Caco-2 (cell line): ENCODE measurements at regions of chr19 and their contacts with region 1.

Region 1: DNA sequence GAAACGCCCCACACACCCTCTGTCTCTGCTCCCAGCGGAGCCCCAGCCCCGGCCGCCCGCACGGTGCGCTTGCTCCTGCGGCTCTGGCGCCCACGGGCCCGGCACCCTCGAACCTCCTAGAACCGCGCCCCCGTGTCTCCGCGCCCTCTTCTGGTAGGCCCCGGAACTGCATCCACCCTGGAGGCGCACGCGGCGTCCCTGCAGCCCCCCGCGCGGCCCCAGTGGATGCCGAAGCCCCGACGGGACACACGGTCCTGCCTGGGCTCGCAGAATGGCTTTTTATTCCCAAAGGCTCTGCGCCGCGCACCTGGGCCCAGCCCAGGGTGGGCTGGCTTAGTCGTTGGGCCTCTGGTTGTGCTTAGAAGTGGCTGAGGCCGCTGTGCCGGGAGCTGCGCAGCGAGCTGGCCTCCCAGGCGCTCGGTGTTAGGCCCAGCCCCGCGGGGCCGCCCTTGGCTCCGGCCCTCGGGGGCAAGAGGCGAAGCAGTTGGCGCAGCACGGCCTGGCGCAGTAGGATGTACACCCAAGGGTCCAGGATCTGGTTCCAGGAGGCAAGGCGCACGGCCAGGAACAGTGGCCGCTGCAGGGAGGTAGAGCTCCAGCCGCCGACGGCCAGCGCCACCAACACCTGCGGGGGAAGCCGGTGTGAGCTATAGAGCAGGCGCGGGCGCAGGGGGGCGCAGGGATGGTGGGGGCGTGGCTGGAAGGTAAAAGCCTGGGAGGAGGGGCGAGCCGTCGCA is 2.8 kb downstream of the PTGER1 start:
- DNase-seq: peak; percentile 66 to 81
- H3K4me3 ChIP-seq: peak overlapping the region; percentile 45
- H3K4me3 Mint-ChIP-seq: peak overlapping the region; percentile 50
- H3K27ac Mint-ChIP-seq: peak overlapping the region; percentile 60
- H3K4me1 ChIP-seq: no peaks in the 10 kb centered on the region; the same call in 1 of the 2 replicates
- H3K4me1 Mint-ChIP-seq: peaks cover 15% of the 10 kb centered on the region
- H3K27me3 ChIP-seq: no peaks in the 10 kb centered on the region
- H3K27me3 Mint-ChIP-seq: no peaks in the 10 kb centered on the region
- CTCF ChIP-seq: peak; percentile 81 to 94

Region 2: GRCh38 chr19:14366498-14366915 is 105.9 kb before region 1 on chr19:
- CTCF ChIA-PET with region 1: interaction called, 8 read pairs
- POLR2A ChIA-PET with region 1: no interaction called
- intact Hi-C with region 1: loop called (anchors 10 kb)
- DNase-seq: peak; percentile 80 to 88
- H3K4me3 ChIP-seq: no peak overlapping the region
- H3K4me3 Mint-ChIP-seq: no peak overlapping the region
- H3K27ac Mint-ChIP-seq: no peak overlapping the region
- H3K4me1 ChIP-seq: no peaks in the 10 kb centered on the region
- H3K4me1 Mint-ChIP-seq: no peaks in the 10 kb centered on the region
- H3K27me3 ChIP-seq: no peaks in the 10 kb centered on the region
- H3K27me3 Mint-ChIP-seq: no peaks in the 10 kb centered on the region
- CTCF ChIP-seq: no peak

Region 3: GRCh38 chr19:14428882-14429416 is 43.4 kb before region 1 on chr19:
- CTCF ChIA-PET with region 1: interaction called, 10 read pairs
- POLR2A ChIA-PET with region 1: no interaction called
- intact Hi-C with region 1: no loop called
- DNase-seq: no peak
- H3K4me3 ChIP-seq: no peak overlapping the region
- H3K4me3 Mint-ChIP-seq: no peak overlapping the region
- H3K27ac Mint-ChIP-seq: no peak overlapping the region
- H3K4me1 ChIP-seq: 0 out of 2 replicates have a peak, but pooled peaks cover 6% of the 10 kb centered on the region
- H3K4me1 Mint-ChIP-seq: peaks cover 14% of the 10 kb centered on the region
- H3K27me3 ChIP-seq: no peaks in the 10 kb centered on the region
- H3K27me3 Mint-ChIP-seq: no peaks in the 10 kb centered on the region
- CTCF ChIP-seq: no peak

Region 4: DNA sequence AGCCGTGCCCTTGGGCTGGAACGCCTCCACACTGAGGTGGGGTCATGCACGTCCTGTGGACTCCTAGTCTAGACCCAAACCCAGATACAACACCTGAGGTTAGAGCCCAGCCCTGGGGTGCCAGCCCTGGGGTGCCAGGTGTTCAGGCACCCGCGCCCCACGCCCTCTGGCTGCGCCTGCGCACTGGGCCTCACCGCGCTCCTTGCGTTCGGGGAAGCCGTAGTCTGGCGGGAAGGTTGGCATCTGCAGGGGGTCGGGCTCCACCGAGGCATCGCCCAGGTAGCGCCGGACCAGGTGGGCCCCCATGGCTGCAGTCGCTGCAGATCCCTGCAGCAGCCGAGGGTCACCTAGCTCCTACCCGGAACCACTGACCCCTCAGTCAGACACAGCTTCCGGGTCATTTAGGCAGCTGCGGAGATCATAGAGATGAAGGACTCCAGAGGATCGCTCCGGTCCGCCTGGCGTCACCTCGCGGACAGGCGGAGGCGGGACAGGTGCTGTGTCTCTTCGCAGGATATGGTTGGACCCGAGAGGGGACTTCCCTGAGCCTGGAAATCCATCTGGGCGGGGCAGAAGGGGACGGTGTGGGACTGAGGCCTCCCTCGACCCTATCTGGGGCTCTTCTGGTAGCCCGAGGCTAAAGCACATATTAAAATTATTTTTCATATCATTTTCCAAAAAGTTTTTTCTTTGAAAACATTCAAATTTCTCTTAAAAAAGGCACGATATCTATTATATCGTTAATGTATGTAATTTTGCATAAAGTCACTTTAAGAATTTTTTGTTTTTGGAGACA is 99.5 kb after region 1 on chr19 and contains the start of gene NDUFB7:
- CTCF ChIA-PET with region 1: no interaction called
- POLR2A ChIA-PET with region 1: no interaction called
- intact Hi-C with region 1: no loop called
- DNase-seq: peak; percentile 93
- H3K4me3 ChIP-seq: peak within 1 kb of the TSS; percentile 92
- H3K4me3 Mint-ChIP-seq: peak within 1 kb of the TSS; percentile 88
- H3K27ac Mint-ChIP-seq: peak within 1 kb of the TSS; percentile 92
- H3K4me1 ChIP-seq: no peaks in the 10 kb centered on the region
- H3K4me1 Mint-ChIP-seq: peaks cover 9% of the 10 kb centered on the region
- H3K27me3 ChIP-seq: no peaks in the 10 kb centered on the region
- H3K27me3 Mint-ChIP-seq: no peaks in the 10 kb centered on the region
- CTCF ChIP-seq: peak; percentile 39 to 87
- total RNA-seq, gene NDUFB7: 158 and 173 TPM in 2 replicates

Region 5: DNA sequence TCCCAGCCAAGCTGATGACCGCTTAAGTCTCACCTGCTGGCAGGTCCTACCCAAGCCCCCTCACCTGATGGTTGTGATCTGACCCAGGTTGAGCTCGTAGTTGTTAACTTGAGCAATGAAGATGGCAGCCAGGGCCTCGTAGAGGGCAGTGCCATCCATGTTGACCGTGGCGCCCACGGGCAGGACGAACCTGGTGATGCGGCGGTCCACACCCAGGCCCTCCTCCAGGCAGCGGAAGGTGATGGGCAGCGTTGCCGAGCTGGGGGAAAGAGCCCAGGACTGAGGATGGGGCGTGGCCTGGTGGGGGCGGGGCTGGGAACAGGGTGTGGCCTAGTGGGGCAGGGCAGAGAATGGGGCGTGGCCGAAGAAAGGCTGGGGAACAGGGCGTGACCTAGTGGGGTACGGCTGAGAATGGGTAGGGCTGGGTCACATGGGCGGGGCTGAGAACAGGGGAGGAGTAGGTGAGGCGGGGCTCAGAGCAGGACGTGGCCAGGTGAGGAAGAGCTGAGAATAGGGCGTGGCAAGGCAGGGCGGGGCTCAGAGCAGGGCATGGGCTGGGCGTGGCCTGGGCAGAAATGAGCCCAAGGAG is 481.8 kb after region 1 on chr19:
- CTCF ChIA-PET with region 1: no interaction called
- POLR2A ChIA-PET with region 1: no interaction called
- intact Hi-C with region 1: no loop called
- DNase-seq: peak in 1 of 2 experiments; percentile 34
- H3K4me3 ChIP-seq: no peak overlapping the region
- H3K4me3 Mint-ChIP-seq: no peak overlapping the region
- H3K27ac Mint-ChIP-seq: no peak overlapping the region
- H3K4me1 ChIP-seq: no peaks in the 10 kb centered on the region
- H3K4me1 Mint-ChIP-seq: no peaks in the 10 kb centered on the region
- H3K27me3 ChIP-seq: no peaks in the 10 kb centered on the region
- H3K27me3 Mint-ChIP-seq: no peaks in the 10 kb centered on the region
- CTCF ChIP-seq: no peak